Dorsolateral prefrontal cortex (tissue), 120 donors: ENCODE measurements at regions of chr6 and their contacts with region 1.

Region 1: GRCh38 chr6:44096612-44097011 is 30.6 kb downstream of the MRPL14 start:
- DNase-seq: peak; percentile 54 to 84 (median 78)
- H3K4me3 ChIP-seq: no peak overlapping the region
- H3K27ac ChIP-seq: peak overlapping the region in 1 of 59 donors; percentile 8
- H3K27me3 ChIP-seq: no peaks in the 10 kb centered on the region
- CTCF ChIP-seq: peak; percentile 57 to 91 (median 83)

Region 2: GRCh38 chr6:44151348-44152108 is 54.9 kb after region 1 on chr6:
- intact Hi-C with region 1: loop called (anchors 1 to 5 kb)
- DNase-seq: peak; percentile 55 to 84 (median 70)
- H3K4me3 ChIP-seq: peak overlapping the region in 8 of 59 donors; percentile 3 to 34 (median 20)
- H3K27ac ChIP-seq: peak overlapping the region in 7 of 59 donors; percentile 11 to 62 (median 21)
- H3K27me3 ChIP-seq: no peaks in the 10 kb centered on the region
- CTCF ChIP-seq: peak; percentile 90 to 100 (median 99)

Region 3: DNA sequence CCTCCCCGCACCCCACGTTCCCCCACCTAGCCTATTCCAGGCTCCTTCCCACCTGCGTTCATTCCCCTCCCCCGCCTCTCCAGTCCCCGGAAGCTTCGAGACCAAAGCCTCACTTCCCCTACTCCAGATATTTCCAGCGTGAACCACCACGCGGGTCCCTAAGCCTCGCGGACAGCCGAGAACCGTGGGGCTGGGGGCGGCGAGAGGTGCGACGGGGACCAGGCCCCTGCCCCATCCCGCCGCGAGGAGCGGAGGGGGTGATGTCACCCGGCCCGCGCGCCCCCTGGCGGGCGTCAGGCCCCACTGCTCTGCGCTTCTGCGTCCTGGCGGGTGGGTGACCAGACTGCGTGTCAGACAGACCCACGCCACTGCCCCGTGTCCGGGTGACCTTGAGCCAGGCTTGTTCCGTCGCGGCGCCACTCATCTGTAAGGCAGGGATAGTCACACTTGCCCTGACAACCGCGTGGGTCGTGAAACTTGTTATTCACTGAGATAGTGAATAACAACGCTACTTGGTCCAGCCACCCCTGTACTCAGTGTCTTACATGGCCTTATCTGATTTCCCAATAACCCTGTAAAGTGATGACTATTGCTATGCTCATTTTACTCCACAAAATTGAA is 141.3 kb after region 1 on chr6:
- intact Hi-C with region 1: loop called (anchors 5 to 10 kb)
- DNase-seq: peak; percentile 72 to 93 (median 78)
- H3K4me3 ChIP-seq: peak overlapping the region; percentile 34 to 81 (median 68)
- H3K27ac ChIP-seq: peak overlapping the region; percentile 85 to 99 (median 97)
- H3K27me3 ChIP-seq: no peaks in the 10 kb centered on the region
- CTCF ChIP-seq: peak; percentile 80 to 99 (median 96)

Region 4: DNA sequence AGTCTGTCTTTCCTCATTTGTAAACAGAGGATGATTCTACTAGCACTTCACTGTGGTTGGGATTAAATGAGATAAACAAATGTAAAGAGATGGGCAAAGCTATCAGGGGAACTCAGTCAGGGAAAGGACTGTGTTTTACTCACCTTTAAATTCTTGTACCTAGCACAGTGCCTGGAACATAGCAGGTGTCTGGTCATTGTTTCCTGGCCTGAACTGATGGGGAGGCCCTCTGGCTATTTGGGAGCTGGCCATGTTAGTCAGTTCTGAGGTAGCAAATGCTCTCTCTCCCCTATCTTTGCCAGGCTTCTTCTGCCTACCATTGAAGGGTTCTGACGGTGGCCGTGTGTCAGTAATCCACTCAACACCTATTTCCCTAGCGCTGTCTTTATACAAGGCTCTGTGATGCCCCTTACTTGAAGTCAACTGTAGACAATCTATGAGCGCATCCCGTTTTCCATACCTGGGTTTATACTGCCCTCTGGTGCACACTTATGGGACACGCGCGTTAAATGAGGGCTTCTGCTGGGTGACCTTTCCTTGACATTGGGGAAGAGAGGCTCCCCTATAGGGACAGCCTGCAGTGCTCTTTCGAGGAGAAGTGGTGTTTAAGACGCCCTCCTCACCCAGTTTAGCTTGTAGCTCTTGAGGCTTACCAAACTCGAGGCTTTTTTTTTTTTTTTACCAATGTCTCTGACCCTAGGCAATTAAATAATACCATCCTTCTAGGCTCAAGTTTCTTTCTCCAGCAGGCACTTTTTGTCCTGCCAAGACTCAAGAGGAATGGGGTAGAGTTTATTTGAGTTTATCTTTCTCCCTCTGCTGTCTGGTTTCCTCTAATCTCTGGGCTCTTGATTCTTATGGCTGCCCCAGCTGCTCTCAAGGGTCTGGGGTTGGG is 241.9 kb after region 1 on chr6:
- intact Hi-C with region 1: loop called in 1 of 2 experiments (anchors 5 kb)
- DNase-seq: peak; percentile 44 to 76 (median 70)
- H3K4me3 ChIP-seq: no peak overlapping the region
- H3K27ac ChIP-seq: peak overlapping the region in 41 of 59 donors; percentile 3 to 80 (median 46)
- H3K27me3 ChIP-seq: peaks cover 0 to 20% (median 0%) of the 10 kb centered on the region in 45 donors
- CTCF ChIP-seq: peak; percentile 51 to 88 (median 75)